AG04449 (cell line): ENCODE measurements at regions of chr16 and their contacts with region 1.

Region 1: DNA sequence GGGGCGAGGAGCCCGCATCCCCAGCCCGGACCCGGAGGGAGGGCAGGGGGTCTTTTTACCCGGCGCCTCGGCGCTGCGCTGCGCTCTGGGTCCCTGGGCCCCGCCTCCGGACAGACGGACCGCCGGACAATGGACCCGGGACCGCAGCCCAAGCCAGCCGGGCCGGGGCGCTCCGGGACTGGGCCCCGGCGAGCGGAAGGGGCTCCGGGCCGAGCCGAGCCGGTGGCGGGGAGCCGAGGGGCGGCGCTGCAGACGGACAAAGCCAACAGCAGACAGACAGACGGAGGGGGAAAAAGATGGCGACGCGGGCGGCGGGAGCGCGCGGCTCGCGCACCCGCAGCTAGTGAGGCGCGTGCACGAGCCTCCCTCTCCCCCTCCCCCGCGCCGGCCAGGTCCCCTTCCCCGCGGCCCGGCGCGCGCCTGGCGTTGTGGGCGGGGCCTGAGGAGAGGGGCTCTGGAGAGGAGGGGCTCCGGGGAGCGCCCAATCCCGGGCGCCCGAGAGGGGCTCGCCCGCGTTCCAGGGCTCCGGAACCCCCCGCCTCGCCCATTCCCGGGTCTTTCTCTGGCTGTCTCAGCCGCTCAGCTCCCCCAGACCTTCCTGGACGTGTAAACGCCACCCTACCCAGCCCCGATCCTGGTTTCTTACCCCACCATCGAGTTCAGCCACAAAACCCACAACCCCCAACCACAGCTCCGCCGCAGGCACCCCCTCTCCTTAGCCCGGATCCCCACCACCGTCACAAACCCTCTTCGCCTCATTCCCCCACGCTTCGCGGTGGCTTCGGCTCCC is at the start of gene ZNF821:
- DNase-seq: no peak
- H3K4me3 ChIP-seq: peak within 1 kb of the TSS; percentile 76
- CTCF ChIP-seq: no peak

Region 2: DNA sequence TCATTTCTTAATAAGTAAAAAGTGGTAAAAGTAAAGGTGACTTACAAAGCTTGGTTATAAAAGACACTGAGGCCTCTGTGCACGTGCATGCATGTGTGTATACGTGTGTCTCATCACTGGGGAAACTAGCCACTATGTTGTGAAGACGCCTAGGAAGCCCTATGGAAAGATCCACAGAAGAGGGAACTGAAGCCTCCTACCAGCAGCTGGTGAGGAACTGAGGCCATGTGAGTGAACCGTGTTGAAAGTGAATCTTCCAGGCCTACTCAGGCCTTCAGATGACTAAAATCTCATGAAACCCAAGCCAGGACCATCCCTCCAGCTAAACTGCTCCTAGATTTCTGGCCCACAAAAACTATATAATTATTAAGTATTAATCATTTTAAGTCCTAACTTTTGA is 183.2 kb before region 1 on chr16:
- CTCF ChIA-PET with region 1: no interaction called
- POLR2A ChIA-PET with region 1: no interaction called
- DNase-seq: no peak
- H3K4me3 ChIP-seq: no peak overlapping the region
- CTCF ChIP-seq: no peak

Region 3: GRCh38 chr16:71808593-71809459 is 75.2 kb before region 1 on chr16 and contains the start of gene AP1G1:
- CTCF ChIA-PET with region 1: interaction called, 15 read pairs
- POLR2A ChIA-PET with region 1: no interaction called
- DNase-seq: peak; percentile 92
- H3K4me3 ChIP-seq: peak within 1 kb of the TSS; percentile 92
- CTCF ChIP-seq: no peak

Region 4: DNA sequence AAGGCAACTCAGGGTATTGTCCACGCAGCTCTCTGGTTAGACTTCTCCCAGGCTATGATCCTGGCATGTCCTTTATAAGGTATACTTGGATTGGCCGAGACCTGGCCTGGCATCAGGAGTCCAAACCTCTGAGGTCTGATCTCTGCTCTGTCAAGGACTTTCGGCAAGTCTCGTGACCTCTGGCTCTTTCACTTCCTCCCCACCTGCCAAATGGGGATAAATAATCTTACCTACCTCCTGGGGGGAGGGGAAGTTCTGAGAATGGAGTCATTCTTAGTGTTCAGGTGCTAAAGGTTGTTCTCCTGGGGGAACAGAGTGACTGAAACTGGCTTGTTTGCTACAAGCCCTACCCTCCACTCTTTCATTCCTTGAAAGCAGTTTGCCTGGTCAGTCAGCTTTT is 30.6 kb before region 1 on chr16:
- CTCF ChIA-PET with region 1: interaction called, 295 read pairs
- POLR2A ChIA-PET with region 1: interaction called, 3 read pairs
- DNase-seq: no peak
- H3K4me3 ChIP-seq: no peak overlapping the region
- CTCF ChIP-seq: no peak

Region 5: DNA sequence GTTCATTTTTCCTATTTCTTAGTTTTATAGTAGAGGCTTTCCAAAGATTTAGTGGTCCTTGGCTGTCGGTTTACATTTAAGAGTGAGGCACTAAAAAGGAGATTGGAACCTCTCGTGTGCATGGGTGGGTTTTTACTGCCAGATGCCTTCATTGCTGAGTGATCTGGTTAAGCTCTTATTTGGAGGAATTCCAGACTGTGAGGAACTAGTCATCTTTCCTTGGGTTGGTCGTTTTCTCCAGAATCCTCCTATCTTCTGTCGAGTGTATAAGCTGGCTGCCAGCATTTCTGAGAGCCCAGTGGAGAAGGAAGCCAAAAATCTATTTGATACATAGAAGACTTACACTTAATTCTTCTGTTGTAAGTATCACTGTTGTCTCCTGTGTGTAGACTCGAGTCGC is 33.9 kb after region 1 on chr16:
- CTCF ChIA-PET with region 1: interaction called, 15 read pairs
- POLR2A ChIA-PET with region 1: no interaction called
- DNase-seq: peak; percentile 55
- H3K4me3 ChIP-seq: no peak overlapping the region
- CTCF ChIP-seq: no peak

Region 6: DNA sequence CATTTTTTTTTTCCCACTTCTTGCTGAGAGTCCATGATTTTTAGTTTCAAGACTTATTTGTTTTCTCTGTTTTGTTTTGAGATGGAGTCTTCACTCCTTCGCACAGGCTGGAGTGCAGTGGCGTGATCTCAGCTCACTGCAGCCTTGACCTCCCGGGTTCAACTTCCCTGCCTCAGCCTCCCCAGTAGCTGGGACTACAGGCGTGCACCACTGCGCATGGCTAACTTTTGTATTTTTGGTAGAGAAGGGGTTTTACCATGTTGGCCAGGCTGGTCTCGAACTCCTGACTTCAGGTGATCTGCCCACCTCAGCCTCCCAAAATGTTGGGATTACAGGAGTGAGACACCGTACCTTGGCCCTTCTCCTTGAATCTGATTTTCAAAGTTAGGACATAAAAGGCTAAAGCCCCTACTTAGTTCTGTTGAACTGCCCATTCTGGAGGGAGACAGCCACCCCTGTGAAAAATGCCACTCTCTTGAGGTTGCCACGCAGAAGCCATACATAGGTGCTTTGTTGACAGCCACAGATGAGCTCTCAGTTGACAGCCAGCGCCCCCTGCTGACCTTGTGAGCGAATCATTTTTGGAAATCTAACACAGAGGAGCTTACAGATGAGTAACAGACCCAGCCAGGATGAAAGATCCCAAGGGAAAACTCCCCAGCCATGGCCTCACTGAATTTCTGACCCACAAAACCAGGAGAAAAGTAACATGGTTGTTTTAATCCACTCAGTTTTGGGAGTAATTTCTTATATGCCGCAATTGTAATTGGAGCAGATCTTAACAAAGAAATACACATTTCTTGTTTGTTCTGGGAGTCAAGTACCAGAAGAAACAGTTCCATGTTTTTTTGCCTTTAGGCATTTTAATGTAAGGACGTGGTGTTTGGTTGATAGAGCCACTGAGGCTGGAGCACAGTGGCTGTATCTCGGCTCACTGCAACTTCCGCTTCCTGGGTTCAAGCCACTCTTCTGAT is 77.3 kb after region 1 on chr16:
- CTCF ChIA-PET with region 1: interaction called, 92 read pairs
- POLR2A ChIA-PET with region 1: interaction called, 4 read pairs
- DNase-seq: peak; percentile 59
- H3K4me3 ChIP-seq: no peak overlapping the region
- CTCF ChIP-seq: peak; percentile 86

Region 7: GRCh38 chr16:72042157-72042660 is 158.2 kb after region 1 on chr16:
- CTCF ChIA-PET with region 1: no interaction called
- POLR2A ChIA-PET with region 1: no interaction called
- DNase-seq: no peak
- H3K4me3 ChIP-seq: no peak overlapping the region
- CTCF ChIP-seq: no peak

Region 8: DNA sequence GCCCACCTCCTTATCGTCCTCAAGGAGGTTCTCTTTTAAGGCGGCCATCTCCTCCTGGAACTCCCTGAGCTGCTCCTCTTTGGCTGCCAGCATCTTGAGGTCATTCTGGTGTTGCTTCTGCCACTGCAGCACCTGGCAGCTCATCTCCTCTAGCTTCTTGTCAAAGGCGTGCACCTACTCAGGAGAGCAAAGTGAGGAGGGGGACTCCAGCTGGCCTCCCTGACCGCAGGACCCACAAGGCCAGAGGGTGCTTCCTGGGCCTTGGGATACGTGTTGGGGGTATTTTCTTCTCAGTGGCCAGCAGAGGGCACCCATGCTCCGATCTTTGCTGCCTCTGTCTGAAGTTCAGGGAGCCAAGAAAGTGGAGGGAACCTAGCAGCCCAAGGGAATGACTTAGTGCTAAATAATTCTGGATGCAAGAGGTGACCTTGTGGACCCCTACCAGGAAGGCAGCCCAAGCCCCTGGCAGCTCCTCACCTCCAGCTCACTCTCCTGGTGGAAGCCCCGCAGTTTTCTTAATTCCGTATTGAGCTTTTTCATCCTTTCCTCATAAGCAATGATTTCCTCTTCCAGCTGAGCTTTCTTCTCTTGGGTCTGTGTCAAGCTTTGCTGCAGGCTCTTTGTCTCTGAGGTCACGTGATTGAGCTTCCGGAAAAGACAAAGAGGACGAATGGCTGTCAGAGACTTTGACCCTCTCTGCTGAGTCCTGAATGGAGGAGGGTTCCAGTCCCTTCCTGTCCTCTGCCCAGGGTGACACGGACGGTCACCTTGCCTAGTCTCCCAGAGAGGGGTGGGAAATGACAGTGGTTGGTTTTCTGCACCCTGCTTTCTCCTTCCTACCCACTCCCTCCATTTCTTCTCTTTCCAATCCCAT is 241.0 kb after region 1 on chr16:
- CTCF ChIA-PET with region 1: no interaction called
- POLR2A ChIA-PET with region 1: no interaction called
- DNase-seq: peak; percentile 9
- H3K4me3 ChIP-seq: no peak overlapping the region
- CTCF ChIP-seq: peak; percentile 81